CD8-positive, alpha-beta T cell (primary cell): ENCODE measurements at regions of chr1 and their contacts with region 1.

Region 1: DNA sequence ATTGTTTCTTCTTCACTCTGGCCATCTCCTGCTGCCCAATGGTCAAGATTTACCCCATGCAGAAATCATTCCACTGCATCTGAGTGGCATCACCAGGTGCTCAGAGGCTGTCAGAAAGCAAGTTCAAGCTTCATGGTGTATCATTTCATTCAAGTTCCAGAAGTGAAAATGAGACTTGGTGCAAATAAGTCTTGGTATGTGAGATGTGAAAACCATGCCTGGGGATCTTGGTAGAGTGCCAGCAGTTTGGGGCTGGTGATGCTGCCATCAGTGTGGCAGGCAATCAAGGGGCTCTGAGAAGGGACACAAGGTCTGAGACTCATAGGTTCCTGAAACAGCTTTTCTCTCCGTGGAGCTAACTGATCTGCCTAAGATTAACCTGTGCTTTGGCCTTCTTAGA is 52.0 kb downstream of the CD2 start:
- DNase-seq: peak in 7 of 9 experiments; percentile 37 to 85 (median 62)
- ATAC-seq: peak; percentile 37
- H3K4me3 ChIP-seq: peak overlapping the region in 1 of 2 experiments; percentile 47
- H3K4me3 Mint-ChIP-seq: peak overlapping the region; percentile 71
- H3K27ac ChIP-seq: peak overlapping the region in 1 of 2 experiments; percentile 87
- H3K27ac Mint-ChIP-seq: peak overlapping the region; percentile 94
- H3K4me1 ChIP-seq: peaks cover 52% of the 10 kb centered on the region
- H3K4me1 Mint-ChIP-seq: peaks cover 80% of the 10 kb centered on the region
- H3K27me3 ChIP-seq: no peaks in the 10 kb centered on the region
- H3K27me3 Mint-ChIP-seq: no peaks in the 10 kb centered on the region
- CTCF ChIP-seq: no peak

Region 2: GRCh38 chr1:116754198-116754977 is 51.9 kb before region 1 on chr1 and contains the start of gene CD2:
- CTCF ChIA-PET with region 1: no interaction called
- POLR2A ChIA-PET with region 1: interaction called, 5 read pairs
- intact Hi-C with region 1: loop called in 1 of 2 experiments (anchors 2 kb)
- DNase-seq: peak in 6 of 9 experiments; percentile 43 to 80 (median 60)
- ATAC-seq: peak; percentile 83
- H3K4me3 ChIP-seq: peak within 1 kb of the TSS; percentile 71 to 84
- H3K4me3 Mint-ChIP-seq: peak within 1 kb of the TSS; percentile 93
- H3K27ac ChIP-seq: peak within 1 kb of the TSS; percentile 70 to 87
- H3K27ac Mint-ChIP-seq: peak within 1 kb of the TSS; percentile 99
- H3K4me1 ChIP-seq: peaks cover 23% of the 10 kb centered on the region
- H3K4me1 Mint-ChIP-seq: peaks cover 40% of the 10 kb centered on the region
- H3K27me3 ChIP-seq: no peaks in the 10 kb centered on the region
- H3K27me3 Mint-ChIP-seq: no peaks in the 10 kb centered on the region
- CTCF ChIP-seq: no peak
- total RNA-seq, gene CD2: 97.8 to 102 TPM

Region 3: DNA sequence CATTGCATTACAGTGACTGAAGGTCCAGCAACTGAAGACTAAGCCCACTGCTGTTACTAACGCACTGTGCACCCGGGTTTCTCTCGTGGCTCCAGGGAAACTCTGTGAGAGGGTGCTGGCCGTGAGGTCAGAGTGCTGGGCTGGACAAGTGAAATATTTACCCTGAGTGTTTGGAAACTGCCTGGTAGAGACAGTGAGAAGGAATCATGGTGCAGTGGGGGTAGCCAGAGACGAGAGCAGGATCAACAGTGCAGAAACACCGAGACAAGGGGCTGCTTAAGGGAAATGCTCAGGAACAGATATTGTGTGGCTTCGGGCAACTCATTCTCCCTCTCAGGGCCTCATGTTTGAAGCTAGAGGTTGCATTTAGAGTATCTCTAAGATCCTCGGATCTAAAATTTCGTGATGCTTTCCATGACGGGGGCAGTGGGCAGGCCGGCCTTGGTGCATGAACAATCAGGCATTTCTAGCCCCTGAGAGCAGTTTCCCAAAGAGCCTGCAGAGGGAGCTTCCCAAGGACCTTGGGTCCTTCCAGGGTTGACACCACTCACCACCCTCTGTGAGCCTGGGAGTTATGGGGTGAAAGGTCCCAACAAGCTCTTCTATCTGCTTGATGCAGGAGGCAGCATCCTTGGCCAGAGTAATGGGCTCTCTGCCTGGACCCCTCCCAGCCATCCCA is 42.3 kb before region 1 on chr1:
- CTCF ChIA-PET with region 1: interaction called, 23 read pairs
- POLR2A ChIA-PET with region 1: interaction called, 44 read pairs
- intact Hi-C with region 1: no loop called
- DNase-seq: peak in 4 of 9 experiments; percentile 45 to 74 (median 58)
- ATAC-seq: peak; percentile 10
- H3K4me3 ChIP-seq: peak overlapping the region; percentile 18 to 22
- H3K4me3 Mint-ChIP-seq: peak overlapping the region; percentile 75
- H3K27ac ChIP-seq: peak overlapping the region; percentile 57 to 87
- H3K27ac Mint-ChIP-seq: peak overlapping the region; percentile 96
- H3K4me1 ChIP-seq: peaks cover 96% of the 10 kb centered on the region
- H3K4me1 Mint-ChIP-seq: peaks cover 96% of the 10 kb centered on the region
- H3K27me3 ChIP-seq: no peaks in the 10 kb centered on the region
- H3K27me3 Mint-ChIP-seq: no peaks in the 10 kb centered on the region
- CTCF ChIP-seq: peak; percentile 22